ENCODE measurements at regions of chr12 and their contacts with region 1.

Region 1: DNA sequence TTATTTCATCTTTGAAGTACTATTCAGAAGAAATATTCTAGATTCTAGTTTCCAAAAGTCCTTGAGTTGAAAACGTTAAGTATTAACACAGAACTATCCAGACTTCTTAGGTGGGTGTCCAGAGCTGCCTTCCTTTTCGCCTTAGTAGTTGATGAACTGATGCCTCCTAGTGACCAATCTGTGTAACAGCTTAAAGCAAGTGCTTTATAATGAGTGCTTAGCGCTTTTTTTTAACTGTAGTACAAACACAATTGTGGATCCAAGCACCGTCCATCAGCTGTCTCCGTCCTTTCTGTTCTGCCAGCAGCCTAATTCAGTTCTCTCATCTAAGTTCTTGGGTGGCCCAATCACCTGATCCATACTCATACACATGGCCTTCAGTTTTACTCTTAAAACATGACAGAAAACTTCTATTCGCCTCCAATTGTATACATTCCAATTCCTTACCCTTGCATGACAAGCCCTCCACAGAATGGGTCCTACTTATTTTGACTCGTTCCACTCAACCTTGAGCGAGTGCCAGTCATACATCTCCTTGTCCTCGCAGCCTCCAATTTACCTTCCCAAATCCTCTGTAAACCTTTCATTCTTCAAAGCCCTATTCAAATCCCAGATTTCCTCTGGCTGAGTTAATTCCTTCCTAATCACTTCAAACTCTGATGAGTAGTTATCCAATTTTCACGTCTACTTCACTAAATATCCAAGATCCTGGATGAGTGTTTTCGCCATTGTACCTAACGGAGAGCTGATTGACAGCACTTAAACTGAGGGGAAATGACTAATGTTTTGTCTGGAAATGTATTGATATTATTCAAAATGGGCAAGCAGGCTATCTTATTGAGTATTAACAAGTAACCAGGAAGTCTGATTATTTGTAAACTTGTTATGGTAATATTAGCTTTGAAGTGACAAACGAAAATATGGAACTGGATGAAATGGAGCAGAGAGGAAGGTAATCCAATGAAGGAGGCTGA is 5.8 kb upstream of the PHLDA1 start:
- DNase-seq: peak; percentile 52
- H3K4me3 Mint-ChIP-seq: peak overlapping the region; percentile 0
- H3K27ac Mint-ChIP-seq: peak overlapping the region; percentile 31
- H3K4me1 Mint-ChIP-seq: peaks cover 57% of the 10 kb centered on the region
- H3K27me3 Mint-ChIP-seq: no peaks in the 10 kb centered on the region
- CTCF ChIP-seq: peak; percentile 71

Region 2: DNA sequence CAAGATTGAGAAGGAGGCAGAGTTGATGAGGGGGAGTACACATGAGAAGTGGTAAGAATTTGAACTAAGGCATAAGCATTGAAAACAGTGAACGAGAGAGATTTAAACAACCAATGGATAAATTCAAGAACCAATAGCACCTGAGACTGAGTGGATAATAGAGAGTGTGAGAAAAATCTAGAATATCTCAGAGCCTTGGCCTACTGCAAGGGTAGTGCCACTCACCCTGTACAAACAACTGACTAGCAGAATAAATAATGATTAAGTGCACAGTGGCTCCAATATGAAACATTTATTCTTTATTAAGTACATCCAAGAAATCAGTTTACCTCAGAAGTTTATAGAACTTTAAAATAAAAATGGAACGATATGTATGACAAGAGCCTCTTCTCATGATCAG is 761.7 kb before region 1 on chr12:
- CTCF ChIA-PET with region 1: no interaction called
- intact Hi-C with region 1: no loop called
- DNase-seq: no peak
- H3K4me3 Mint-ChIP-seq: no peak overlapping the region
- H3K27ac Mint-ChIP-seq: no peak overlapping the region
- H3K4me1 Mint-ChIP-seq: peaks cover 14% of the 10 kb centered on the region
- H3K27me3 Mint-ChIP-seq: no peaks in the 10 kb centered on the region
- CTCF ChIP-seq: no peak

Region 3: DNA sequence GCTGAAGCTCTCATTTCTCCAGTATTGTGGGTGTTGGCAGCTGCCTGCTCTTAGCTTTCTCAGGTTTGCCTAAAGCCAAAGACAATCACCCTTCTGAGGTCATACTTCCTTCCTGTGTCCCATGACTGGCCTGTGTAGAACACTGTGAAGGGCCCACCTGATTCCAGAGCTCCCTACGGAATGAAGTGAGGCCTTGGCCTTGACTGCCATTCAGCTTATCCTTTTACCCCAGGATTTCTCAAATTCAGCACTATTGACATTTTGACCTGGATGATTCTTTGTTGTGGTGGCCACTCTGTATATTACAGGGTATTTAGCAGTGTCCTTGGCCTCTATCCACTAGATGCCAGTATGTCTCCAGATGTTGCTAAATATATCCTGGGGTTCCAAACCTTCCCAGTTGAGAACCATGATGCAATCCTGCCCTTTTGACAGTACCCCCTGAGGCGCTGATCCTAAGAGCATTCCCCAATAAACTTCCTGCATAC is 413.7 kb before region 1 on chr12:
- CTCF ChIA-PET with region 1: interaction called, 3 read pairs
- intact Hi-C with region 1: loop called (anchors 2 kb)
- DNase-seq: peak; percentile 40
- H3K4me3 Mint-ChIP-seq: no peak overlapping the region
- H3K27ac Mint-ChIP-seq: peak overlapping the region; percentile 89
- H3K4me1 Mint-ChIP-seq: peaks cover 35% of the 10 kb centered on the region
- H3K27me3 Mint-ChIP-seq: no peaks in the 10 kb centered on the region
- CTCF ChIP-seq: peak; percentile 27

Region 4: GRCh38 chr12:75837700-75838099 is 199.7 kb before region 1 on chr12:
- CTCF ChIA-PET with region 1: no interaction called
- intact Hi-C with region 1: no loop called
- DNase-seq: no peak
- H3K4me3 Mint-ChIP-seq: no peak overlapping the region
- H3K27ac Mint-ChIP-seq: no peak overlapping the region
- H3K4me1 Mint-ChIP-seq: peaks cover 26% of the 10 kb centered on the region
- H3K27me3 Mint-ChIP-seq: no peaks in the 10 kb centered on the region
- CTCF ChIP-seq: no peak

Region 5: GRCh38 chr12:75969768-75970167 is 67.6 kb before region 1 on chr12:
- CTCF ChIA-PET with region 1: no interaction called
- intact Hi-C with region 1: no loop called
- DNase-seq: no peak
- H3K4me3 Mint-ChIP-seq: no peak overlapping the region
- H3K27ac Mint-ChIP-seq: peak overlapping the region; percentile 48
- H3K4me1 Mint-ChIP-seq: peaks cover 46% of the 10 kb centered on the region
- H3K27me3 Mint-ChIP-seq: no peaks in the 10 kb centered on the region
- CTCF ChIP-seq: no peak

Measured in Calu3 (cell line).